PC-3 (cell line): ENCODE measurements at regions of chr6 and their contacts with region 1.

Region 1: DNA sequence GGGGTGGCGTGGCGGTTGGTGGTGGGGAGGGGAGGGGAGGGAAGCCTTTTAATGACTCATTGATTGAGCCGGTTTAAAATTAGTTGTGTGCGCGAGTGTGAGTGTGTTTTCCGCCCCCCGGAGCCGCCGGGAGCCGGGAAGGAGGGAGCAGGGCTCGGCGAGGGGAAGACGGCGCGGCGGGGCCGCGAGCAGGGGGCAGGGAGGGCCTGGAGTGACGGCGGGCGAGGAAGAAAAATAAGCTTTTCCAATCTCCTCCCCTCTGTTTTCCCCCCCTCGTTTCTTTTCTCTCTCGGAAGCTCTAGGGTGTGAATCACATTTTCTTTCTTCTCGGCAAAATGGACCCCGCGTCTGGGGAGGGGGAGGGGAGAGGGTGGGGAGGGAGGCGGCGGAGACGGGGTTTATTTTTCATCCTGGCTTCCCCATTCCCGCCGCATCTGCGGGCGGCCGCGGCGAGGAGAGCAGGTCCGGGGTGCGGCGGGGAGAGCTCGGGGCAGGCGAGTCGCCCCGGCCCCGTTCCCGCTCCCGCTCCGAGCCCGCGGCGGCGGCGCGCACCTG is 847 bp downstream of the BICRAL start:
- DNase-seq: peak; percentile 84
- ATAC-seq: peak; percentile 59
- H3K4me3 ChIP-seq: peak overlapping the region; percentile 76
- H3K27ac ChIP-seq: peak overlapping the region; percentile 93
- H3K4me1 ChIP-seq: peaks cover 41% of the 10 kb centered on the region
- H3K27me3 ChIP-seq: no peaks in the 10 kb centered on the region
- CTCF ChIP-seq: no peak

Region 2: DNA sequence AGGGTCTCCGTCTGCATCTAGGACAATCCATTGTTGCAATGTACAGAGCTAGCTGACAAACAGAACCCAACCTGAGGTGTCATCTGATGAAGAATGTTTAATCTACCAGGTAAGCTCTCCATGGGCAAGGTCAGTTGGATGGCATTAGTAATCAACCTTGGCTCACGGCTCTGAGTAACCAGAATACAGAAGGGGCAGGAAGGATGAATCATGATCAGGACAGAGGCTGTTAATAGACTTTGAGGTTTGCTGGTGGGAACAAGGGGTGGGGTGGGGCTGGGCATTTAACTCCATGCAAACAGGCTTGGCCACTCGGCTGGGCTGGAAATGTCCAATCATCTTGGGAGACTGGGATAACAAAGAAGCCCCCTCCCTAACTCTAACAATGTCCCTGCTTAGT is 487.9 kb before region 1 on chr6:
- CTCF ChIA-PET with region 1: interaction called, 26 read pairs
- POLR2A ChIA-PET with region 1: no interaction called
- intact Hi-C with region 1: no loop called
- DNase-seq: peak; percentile 97
- ATAC-seq: peak; percentile 93
- H3K4me3 ChIP-seq: no peak overlapping the region
- H3K27ac ChIP-seq: peak overlapping the region; percentile 96
- H3K4me1 ChIP-seq: peaks cover 65% of the 10 kb centered on the region
- H3K27me3 ChIP-seq: no peaks in the 10 kb centered on the region
- CTCF ChIP-seq: no peak

Region 3: DNA sequence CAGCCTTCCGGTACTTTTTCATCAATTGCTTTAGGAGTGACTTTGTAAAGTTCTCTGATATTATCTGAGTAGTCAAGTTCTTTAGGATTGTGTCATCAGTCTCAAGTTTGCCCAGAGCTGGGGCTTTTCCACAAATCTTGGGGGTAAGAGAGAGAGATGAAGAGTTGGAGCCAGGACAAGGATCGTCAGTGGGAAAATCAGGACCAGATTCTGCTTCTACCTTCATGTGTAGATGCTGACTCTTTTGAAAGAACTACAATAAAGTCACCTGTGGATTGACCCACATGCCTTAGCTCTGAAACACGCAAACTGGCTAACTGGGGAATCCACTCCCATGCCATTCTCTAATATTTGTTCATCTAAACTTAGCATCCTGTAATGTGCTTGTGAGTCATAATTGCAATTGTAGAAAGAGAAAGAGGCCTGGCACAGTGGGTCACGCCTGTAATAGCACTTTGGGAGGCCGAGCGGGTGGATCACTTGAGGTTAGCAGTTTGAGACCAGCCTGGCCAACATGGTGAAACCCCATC is 16.5 kb before region 1 on chr6:
- CTCF ChIA-PET with region 1: interaction called, 4 read pairs
- POLR2A ChIA-PET with region 1: interaction called, 5 read pairs
- intact Hi-C with region 1: loop called (anchors 2 kb)
- DNase-seq: peak; percentile 92
- ATAC-seq: peak; percentile 96
- H3K4me3 ChIP-seq: peak overlapping the region; percentile 36; the same call in 1 of the 2 replicates
- H3K27ac ChIP-seq: peak overlapping the region; percentile 84
- H3K4me1 ChIP-seq: peaks cover 19% of the 10 kb centered on the region
- H3K27me3 ChIP-seq: no peaks in the 10 kb centered on the region
- CTCF ChIP-seq: no peak

Region 4: GRCh38 chr6:42879372-42880239 is 96.9 kb after region 1 on chr6 and contains the start of gene RPL7L1:
- CTCF ChIA-PET with region 1: interaction called, 7 read pairs
- POLR2A ChIA-PET with region 1: interaction called, 12 read pairs
- intact Hi-C with region 1: loop called (anchors 2 kb)
- DNase-seq: peak; percentile 85
- ATAC-seq: peak; percentile 89
- H3K4me3 ChIP-seq: peak within 1 kb of the TSS; percentile 85
- H3K27ac ChIP-seq: peak within 1 kb of the TSS; percentile 76
- H3K4me1 ChIP-seq: peaks cover 4% of the 10 kb centered on the region; the same call in 1 of the 2 replicates
- H3K27me3 ChIP-seq: no peaks in the 10 kb centered on the region
- CTCF ChIP-seq: no peak
- total RNA-seq, gene RPL7L1: 87.6 and 99.5 TPM in 2 replicates

Region 5: GRCh38 chr6:43629505-43630300 is 847.0 kb after region 1 on chr6:
- CTCF ChIA-PET with region 1: no interaction called
- POLR2A ChIA-PET with region 1: interaction called, 22 read pairs
- intact Hi-C with region 1: no loop called
- DNase-seq: peak; percentile 98
- ATAC-seq: peak; percentile 75
- H3K4me3 ChIP-seq: peak overlapping the region; percentile 76
- H3K27ac ChIP-seq: peak overlapping the region; percentile 85
- H3K4me1 ChIP-seq: peaks cover 27% of the 10 kb centered on the region
- H3K27me3 ChIP-seq: no peaks in the 10 kb centered on the region
- CTCF ChIP-seq: no peak